GM10248 (cell line): ENCODE measurements at regions of chr4 and their contacts with region 1.

Region 1: DNA sequence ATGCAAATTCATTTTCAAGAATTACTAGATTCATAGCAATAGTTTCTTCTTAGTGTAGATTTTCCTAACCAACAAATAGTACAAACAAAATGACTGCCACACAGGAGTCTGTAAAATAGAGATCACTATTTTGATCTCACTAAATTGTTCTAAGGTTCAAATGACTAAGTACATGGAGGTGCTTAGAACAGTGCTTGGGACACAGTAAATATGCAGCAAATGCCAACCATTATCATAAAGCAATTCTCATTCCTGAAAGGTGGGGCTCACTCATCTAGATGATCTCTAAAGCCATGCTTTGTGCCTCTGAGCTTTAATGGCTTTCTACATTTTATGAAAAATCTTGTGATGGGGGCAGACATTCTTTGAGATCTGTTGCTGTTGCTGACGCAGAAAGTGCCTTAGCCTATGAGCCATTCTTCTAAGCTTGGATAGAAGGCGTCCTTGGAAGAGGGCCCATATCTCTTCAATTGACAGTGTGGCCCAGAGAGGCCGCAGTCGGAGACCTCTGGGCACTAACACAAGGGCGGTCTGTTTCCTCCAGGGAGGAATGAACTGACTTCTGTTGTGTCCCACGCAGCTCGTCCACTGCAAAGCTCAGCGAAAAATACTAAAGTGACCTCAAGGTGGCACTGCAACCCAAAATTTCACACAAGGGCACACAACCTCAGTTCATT is 23.5 kb downstream of the TLR10 start:
- DNase-seq: peak; percentile 45
- CTCF ChIP-seq: peak; percentile 62

Region 2: GRCh38 chr4:38612646-38613414 is 146.4 kb before region 1 on chr4:
- CTCF ChIA-PET with region 1: no interaction called
- POLR2A ChIA-PET with region 1: no interaction called
- DNase-seq: no peak
- CTCF ChIP-seq: no peak

Region 3: DNA sequence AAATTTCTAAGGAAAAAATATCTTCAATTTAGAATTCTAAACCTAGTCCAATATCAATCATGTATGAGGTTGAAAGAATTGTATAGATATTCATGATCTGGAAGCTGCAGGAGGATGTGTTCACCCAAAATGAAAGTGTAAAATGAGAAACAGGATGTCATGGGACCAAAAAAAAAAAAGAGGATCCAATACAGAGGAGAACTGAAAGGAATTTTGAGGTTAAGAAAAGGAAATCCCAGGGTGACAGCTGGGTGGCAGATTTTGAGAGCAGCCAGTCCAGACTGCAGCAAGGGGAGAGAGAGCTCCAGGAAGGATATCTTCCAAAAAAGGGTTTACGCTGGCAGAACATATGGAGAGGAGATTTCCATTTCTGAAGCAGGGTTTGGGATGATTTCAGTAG is 15.4 kb before region 1 on chr4:
- CTCF ChIA-PET with region 1: interaction called, 30 read pairs
- POLR2A ChIA-PET with region 1: no interaction called
- DNase-seq: no peak
- CTCF ChIP-seq: no peak

Region 4: GRCh38 chr4:38788327-38788726 is 29.1 kb after region 1 on chr4:
- CTCF ChIA-PET with region 1: interaction called, 248 read pairs
- POLR2A ChIA-PET with region 1: interaction called, 5 read pairs
- DNase-seq: no peak
- CTCF ChIP-seq: no peak

Region 5: DNA sequence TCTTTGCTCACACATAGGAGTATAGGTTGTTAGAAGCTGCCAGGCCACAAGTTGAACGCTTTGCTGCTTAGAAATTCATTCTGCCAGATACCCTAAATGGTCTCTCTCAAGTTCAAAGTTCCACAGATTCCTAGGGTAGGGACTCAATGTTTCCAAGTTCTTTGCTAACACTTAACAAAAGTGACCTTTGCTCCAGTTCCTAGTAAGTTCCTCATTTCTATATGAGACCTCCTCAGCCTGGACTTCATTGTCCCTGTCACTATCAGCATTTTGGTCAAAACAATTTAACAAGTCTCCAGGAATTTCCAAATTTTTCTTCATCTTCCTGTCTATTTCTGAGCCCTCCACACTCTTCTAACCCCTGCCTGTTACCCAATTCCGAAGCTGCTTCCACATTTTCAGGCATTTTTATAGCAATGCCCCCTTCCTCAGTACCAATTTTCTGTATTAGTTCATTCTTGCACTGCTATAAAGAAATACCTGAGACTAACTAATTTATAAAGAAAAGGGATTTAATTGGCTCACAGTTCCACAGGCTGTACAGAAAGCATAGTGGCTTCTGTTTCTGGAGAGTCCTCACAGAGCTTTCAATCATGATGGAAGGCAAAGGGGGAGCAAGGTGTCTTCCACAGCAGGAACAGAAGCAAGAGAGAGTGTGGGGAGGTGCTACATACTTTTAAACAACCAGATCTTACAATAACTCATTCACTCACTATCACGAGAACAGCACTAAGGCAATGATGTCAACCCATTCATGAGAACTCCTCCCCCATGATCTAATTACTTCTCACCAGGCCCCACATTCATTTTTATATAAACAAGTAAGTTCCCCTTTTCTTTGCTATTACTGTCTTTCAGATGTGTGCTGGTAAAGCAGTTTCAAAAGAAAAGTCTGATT is 56.9 kb after region 1 on chr4:
- CTCF ChIA-PET with region 1: interaction called, 14 read pairs
- POLR2A ChIA-PET with region 1: interaction called, 6 read pairs
- DNase-seq: no peak
- CTCF ChIP-seq: no peak

Region 6: DNA sequence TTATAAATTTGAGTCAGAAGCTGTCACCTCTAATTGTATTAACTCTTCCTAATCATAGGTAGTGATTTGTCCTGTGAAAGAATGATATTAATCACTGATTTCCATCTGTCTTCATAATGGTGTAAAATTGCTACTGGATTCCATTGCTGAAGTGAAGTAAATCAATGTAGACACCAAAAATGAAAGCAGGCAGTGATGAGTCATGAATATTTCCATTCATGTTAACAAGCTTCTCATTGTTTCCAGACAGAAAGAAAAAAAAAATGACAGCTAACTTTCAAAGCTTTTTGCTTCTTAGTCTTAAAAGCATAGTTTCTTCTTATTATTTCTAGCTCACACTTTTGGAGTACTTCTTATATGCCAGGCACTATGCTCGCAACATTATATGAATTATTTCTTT is 129.9 kb after region 1 on chr4:
- CTCF ChIA-PET with region 1: interaction called, 16 read pairs
- POLR2A ChIA-PET with region 1: no interaction called
- DNase-seq: peak; percentile 69
- CTCF ChIP-seq: no peak